Endothelial cell of umbilical vein (primary cell): ENCODE measurements at regions of chr1 and their contacts with region 1.

Region 1: DNA sequence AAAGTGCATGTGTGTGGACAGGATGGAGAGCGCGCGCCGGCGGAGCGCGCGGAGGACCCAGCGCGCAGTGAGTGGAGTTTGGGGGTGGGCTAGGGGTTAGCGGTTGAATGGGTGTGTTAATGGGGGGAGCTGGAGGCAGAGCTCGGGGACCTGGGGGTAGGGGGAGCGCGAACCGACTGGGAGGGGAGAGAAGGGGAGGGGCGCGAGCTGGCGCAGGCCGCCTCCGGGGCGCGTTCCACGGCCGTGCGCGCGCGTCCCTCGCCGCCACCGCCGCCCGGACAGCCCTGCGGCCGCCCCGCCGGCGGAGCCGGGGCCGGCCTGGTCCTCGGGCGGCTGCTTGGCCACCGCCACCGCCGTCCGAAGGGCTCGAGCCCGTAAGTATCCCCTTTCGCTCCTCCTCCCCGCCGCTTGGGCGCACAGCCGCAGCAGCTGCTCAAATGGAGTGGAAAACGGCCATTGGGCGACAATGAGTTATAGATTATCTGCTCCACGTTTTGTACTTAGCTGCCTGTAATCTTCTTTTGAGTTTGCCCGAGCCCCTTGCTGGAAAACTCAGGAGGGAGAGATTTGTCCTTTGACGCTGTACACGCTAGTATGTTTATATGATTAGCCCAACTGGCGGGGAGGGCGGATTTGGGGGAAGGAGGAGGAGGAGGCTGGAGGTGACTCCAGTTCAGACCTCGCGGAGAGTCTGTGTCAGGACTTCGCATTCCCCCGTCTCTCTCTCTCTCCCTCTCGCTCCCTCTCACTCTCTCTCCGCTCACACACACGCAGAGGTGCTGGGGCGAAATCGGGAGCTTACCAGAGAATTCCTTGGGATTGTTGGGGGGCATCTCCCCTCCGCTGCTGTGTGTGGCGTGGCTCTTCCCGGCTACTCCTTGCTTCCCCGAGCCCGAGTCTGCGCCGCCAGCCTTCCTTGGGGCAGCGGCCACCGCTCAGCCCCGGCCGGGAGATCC is at the start of gene ADGRL2:
- DNase-seq: peak; percentile 91
- H3K4me3 ChIP-seq: peak within 1 kb of the TSS; percentile 71 to 99 (median 89)
- H3K27ac ChIP-seq: peak within 1 kb of the TSS; percentile 79
- H3K4me1 ChIP-seq: peaks cover 10% of the 10 kb centered on the region
- H3K27me3 ChIP-seq: no peaks in the 10 kb centered on the region
- CTCF ChIP-seq: no peak
- POLR2A ChIP-seq: no peak
- total RNA-seq, gene ADGRL2: 40.0 and 46.1 TPM in 2 replicates

Region 2: GRCh38 chr1:80218112-80218511 is 1582.9 kb before region 1 on chr1:
- CTCF ChIA-PET with region 1: interaction called, 8 read pairs
- POLR2A ChIA-PET with region 1: no interaction called
- dilution Hi-C with region 1: no loop called
- intact Hi-C with region 1: loop called (anchors 5 kb)
- DNase-seq: peak; percentile 51
- H3K4me3 ChIP-seq: no peak overlapping the region
- H3K27ac ChIP-seq: no peak overlapping the region
- H3K4me1 ChIP-seq: no peaks in the 10 kb centered on the region
- H3K27me3 ChIP-seq: no peaks in the 10 kb centered on the region
- CTCF ChIP-seq: peak; percentile 30 to 43
- POLR2A ChIP-seq: no peak

Region 3: GRCh38 chr1:81549604-81550127 is 251.3 kb before region 1 on chr1:
- CTCF ChIA-PET with region 1: interaction called, 95 read pairs
- POLR2A ChIA-PET with region 1: no interaction called
- dilution Hi-C with region 1: no loop called
- intact Hi-C with region 1: loop called (anchors 1 kb)
- DNase-seq: peak; percentile 77
- H3K4me3 ChIP-seq: no peak overlapping the region
- H3K27ac ChIP-seq: no peak overlapping the region
- H3K4me1 ChIP-seq: no peaks in the 10 kb centered on the region
- H3K27me3 ChIP-seq: no peaks in the 10 kb centered on the region
- CTCF ChIP-seq: peak; percentile 31 to 41
- POLR2A ChIP-seq: no peak

Region 4: GRCh38 chr1:81731989-81732388 is 69.0 kb before region 1 on chr1:
- CTCF ChIA-PET with region 1: no interaction called
- POLR2A ChIA-PET with region 1: no interaction called
- dilution Hi-C with region 1: no loop called
- intact Hi-C with region 1: no loop called
- DNase-seq: peak; percentile 70
- H3K4me3 ChIP-seq: no peak overlapping the region
- H3K27ac ChIP-seq: peak overlapping the region; percentile 46
- H3K4me1 ChIP-seq: peaks cover 13% of the 10 kb centered on the region
- H3K27me3 ChIP-seq: no peaks in the 10 kb centered on the region
- CTCF ChIP-seq: no peak
- POLR2A ChIP-seq: no peak

Region 5: GRCh38 chr1:81760477-81761097 is 40.4 kb before region 1 on chr1:
- CTCF ChIA-PET with region 1: interaction called, 26 read pairs
- POLR2A ChIA-PET with region 1: no interaction called
- dilution Hi-C with region 1: no loop called
- intact Hi-C with region 1: no loop called
- DNase-seq: peak; percentile 62
- H3K4me3 ChIP-seq: no peak overlapping the region
- H3K27ac ChIP-seq: no peak overlapping the region
- H3K4me1 ChIP-seq: peaks cover 3% of the 10 kb centered on the region
- H3K27me3 ChIP-seq: no peaks in the 10 kb centered on the region
- CTCF ChIP-seq: peak; percentile 7 to 18
- POLR2A ChIP-seq: no peak

Region 6: GRCh38 chr1:82565146-82565545 is 764.2 kb after region 1 on chr1:
- CTCF ChIA-PET with region 1: interaction called, 8 read pairs
- POLR2A ChIA-PET with region 1: no interaction called
- dilution Hi-C with region 1: no loop called
- intact Hi-C with region 1: loop called (anchors 1 kb)
- DNase-seq: no peak
- H3K4me3 ChIP-seq: no peak overlapping the region
- H3K27ac ChIP-seq: peak overlapping the region; percentile 22
- H3K4me1 ChIP-seq: peaks cover 11% of the 10 kb centered on the region
- H3K27me3 ChIP-seq: no peaks in the 10 kb centered on the region
- CTCF ChIP-seq: peak in 1 of 2 donors; percentile 6
- POLR2A ChIP-seq: no peak

Region 7: GRCh38 chr1:82837766-82838465 is 1036.9 kb after region 1 on chr1:
- CTCF ChIA-PET with region 1: no interaction called
- POLR2A ChIA-PET with region 1: no interaction called
- dilution Hi-C with region 1: no loop called
- intact Hi-C with region 1: loop called (anchors 10 kb)
- DNase-seq: peak; percentile 63
- H3K4me3 ChIP-seq: no peak overlapping the region
- H3K27ac ChIP-seq: no peak overlapping the region
- H3K4me1 ChIP-seq: peaks cover 14% of the 10 kb centered on the region
- H3K27me3 ChIP-seq: no peaks in the 10 kb centered on the region
- CTCF ChIP-seq: no peak
- POLR2A ChIP-seq: no peak